Activated B cell treated with CpG ODN at 0.5 μM for 24 hours (primary cell): ENCODE measurements at regions of chr2 and their contacts with region 1.

Region 1: GRCh38 chr2:43131024-43131889 is 95.1 kb downstream of the ZFP36L2 start:
- DNase-seq: peak; percentile 62
- ATAC-seq: peak; percentile 61
- H3K4me3 Mint-ChIP-seq: peak overlapping the region; percentile 8
- H3K27ac Mint-ChIP-seq: peak overlapping the region; percentile 92
- H3K4me1 Mint-ChIP-seq: peaks cover 93% of the 10 kb centered on the region
- H3K27me3 Mint-ChIP-seq: no peaks in the 10 kb centered on the region
- CTCF ChIP-seq: no peak

Region 2: GRCh38 chr2:42386684-42387083 is 744.6 kb before region 1 on chr2:
- CTCF ChIA-PET with region 1: no interaction called
- POLR2A ChIA-PET with region 1: no interaction called
- intact Hi-C with region 1: no loop called
- DNase-seq: no peak
- ATAC-seq: no peak
- H3K4me3 Mint-ChIP-seq: no peak overlapping the region
- H3K27ac Mint-ChIP-seq: no peak overlapping the region
- H3K4me1 Mint-ChIP-seq: no peaks in the 10 kb centered on the region
- H3K27me3 Mint-ChIP-seq: peaks cover 7% of the 10 kb centered on the region
- CTCF ChIP-seq: no peak

Region 3: DNA sequence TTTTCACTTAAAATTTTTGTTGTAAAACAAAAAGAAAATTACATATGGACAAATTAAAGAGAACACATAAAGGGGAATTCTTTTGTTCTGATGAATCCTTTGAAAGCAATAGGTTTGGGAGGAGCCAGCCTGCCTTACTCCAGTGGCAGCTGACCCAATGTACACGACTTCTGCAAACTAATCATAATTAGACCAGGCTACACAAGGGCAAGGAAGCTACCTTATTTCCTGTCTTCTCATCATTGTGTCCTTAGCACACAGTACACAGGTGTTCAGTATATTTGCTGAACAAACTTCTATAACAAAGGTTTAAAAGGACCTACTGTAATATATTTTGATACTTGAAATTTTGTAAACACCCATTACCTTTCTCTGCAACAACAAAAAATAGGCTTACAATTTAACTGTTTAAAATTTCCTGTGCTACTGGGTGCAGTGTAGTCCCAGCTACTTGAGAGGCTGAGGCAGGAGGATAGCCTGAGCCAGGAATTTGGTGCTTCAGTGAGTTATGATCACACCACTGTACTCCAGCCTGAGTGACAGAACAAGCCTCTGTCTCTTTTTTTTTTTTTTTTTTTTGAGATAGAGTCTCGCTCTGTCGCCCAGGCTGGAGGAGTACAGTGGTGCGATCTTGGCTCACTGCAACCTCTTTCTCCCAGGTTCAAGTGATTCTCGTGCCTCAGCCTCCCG is 656.3 kb before region 1 on chr2:
- CTCF ChIA-PET with region 1: no interaction called
- POLR2A ChIA-PET with region 1: no interaction called
- intact Hi-C with region 1: no loop called
- DNase-seq: no peak
- ATAC-seq: no peak
- H3K4me3 Mint-ChIP-seq: no peak overlapping the region
- H3K27ac Mint-ChIP-seq: no peak overlapping the region
- H3K4me1 Mint-ChIP-seq: no peaks in the 10 kb centered on the region
- H3K27me3 Mint-ChIP-seq: no peaks in the 10 kb centered on the region
- CTCF ChIP-seq: no peak

Region 4: GRCh38 chr2:42944779-42945415 is 186.4 kb before region 1 on chr2:
- CTCF ChIA-PET with region 1: interaction called, 9 read pairs
- POLR2A ChIA-PET with region 1: no interaction called
- intact Hi-C with region 1: loop called (anchors 1 kb)
- DNase-seq: no peak
- ATAC-seq: no peak
- H3K4me3 Mint-ChIP-seq: no peak overlapping the region
- H3K27ac Mint-ChIP-seq: no peak overlapping the region
- H3K4me1 Mint-ChIP-seq: peaks cover 32% of the 10 kb centered on the region
- H3K27me3 Mint-ChIP-seq: no peaks in the 10 kb centered on the region
- CTCF ChIP-seq: no peak

Region 5: GRCh38 chr2:42961385-42961811 is 169.9 kb before region 1 on chr2:
- CTCF ChIA-PET with region 1: no interaction called
- POLR2A ChIA-PET with region 1: no interaction called
- intact Hi-C with region 1: no loop called
- DNase-seq: no peak
- ATAC-seq: no peak
- H3K4me3 Mint-ChIP-seq: peak overlapping the region; percentile 50
- H3K27ac Mint-ChIP-seq: peak overlapping the region; percentile 13
- H3K4me1 Mint-ChIP-seq: peaks cover 32% of the 10 kb centered on the region
- H3K27me3 Mint-ChIP-seq: peaks cover 2% of the 10 kb centered on the region
- CTCF ChIP-seq: no peak

Region 6: GRCh38 chr2:43105586-43106558 is 25.4 kb before region 1 on chr2:
- CTCF ChIA-PET with region 1: interaction called, 5 read pairs
- POLR2A ChIA-PET with region 1: interaction called, 4 read pairs
- intact Hi-C with region 1: loop called (anchors 1 kb)
- DNase-seq: no peak
- ATAC-seq: peak; percentile 67
- H3K4me3 Mint-ChIP-seq: peak overlapping the region; percentile 60
- H3K27ac Mint-ChIP-seq: peak overlapping the region; percentile 85
- H3K4me1 Mint-ChIP-seq: peaks cover 65% of the 10 kb centered on the region
- H3K27me3 Mint-ChIP-seq: no peaks in the 10 kb centered on the region
- CTCF ChIP-seq: no peak

Region 7: GRCh38 chr2:43169987-43170386 is 38.7 kb after region 1 on chr2:
- CTCF ChIA-PET with region 1: interaction called, 16 read pairs
- POLR2A ChIA-PET with region 1: interaction called, 82 read pairs
- intact Hi-C with region 1: loop called (anchors 1 kb)
- DNase-seq: peak; percentile 43
- ATAC-seq: no peak
- H3K4me3 Mint-ChIP-seq: peak overlapping the region; percentile 79
- H3K27ac Mint-ChIP-seq: peak overlapping the region; percentile 98
- H3K4me1 Mint-ChIP-seq: peaks cover 82% of the 10 kb centered on the region
- H3K27me3 Mint-ChIP-seq: no peaks in the 10 kb centered on the region
- CTCF ChIP-seq: no peak

Region 8: GRCh38 chr2:43219383-43220228 is 88.3 kb after region 1 on chr2:
- CTCF ChIA-PET with region 1: interaction called, 336 read pairs
- POLR2A ChIA-PET with region 1: interaction called, 561 read pairs
- intact Hi-C with region 1: loop called (anchors 1 kb)
- DNase-seq: peak; percentile 58
- ATAC-seq: peak; percentile 54
- H3K4me3 Mint-ChIP-seq: peak overlapping the region; percentile 92
- H3K27ac Mint-ChIP-seq: peak overlapping the region; percentile 99
- H3K4me1 Mint-ChIP-seq: peaks cover 71% of the 10 kb centered on the region
- H3K27me3 Mint-ChIP-seq: peaks cover 2% of the 10 kb centered on the region
- CTCF ChIP-seq: no peak

Region 9: DNA sequence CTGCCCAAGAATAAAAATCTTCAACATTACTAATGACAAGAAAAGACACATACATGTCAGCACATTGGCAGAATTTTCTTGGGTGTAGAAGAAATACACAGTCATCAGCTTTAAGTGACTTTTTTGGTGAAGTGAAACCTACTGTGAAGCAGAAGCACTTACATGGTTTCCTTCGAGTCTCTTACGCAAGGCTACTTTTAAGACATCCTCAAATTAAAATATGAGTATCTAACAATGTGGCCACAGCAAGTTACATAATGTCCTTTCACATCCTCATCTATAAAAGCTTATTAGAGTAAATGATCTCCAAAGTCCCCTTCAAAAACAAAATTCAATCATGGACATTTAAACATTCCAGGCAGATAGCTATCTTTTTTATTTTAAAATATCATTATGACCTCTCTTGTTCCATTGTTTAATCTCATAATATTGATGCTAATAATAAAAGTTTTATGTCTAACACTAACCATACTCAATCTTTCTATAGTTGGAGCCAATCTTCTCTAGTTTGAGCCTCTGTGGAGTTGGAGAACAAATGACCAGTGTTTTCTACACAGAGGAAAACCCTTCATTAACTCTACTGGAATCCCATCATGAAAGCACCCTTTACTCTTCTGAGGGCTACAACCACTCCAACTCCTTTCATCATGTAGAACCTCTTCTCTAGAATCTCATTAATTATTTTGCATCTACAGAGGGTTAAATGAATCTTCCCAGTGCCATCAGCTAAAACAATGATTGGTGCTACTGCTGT is 277.3 kb after region 1 on chr2:
- CTCF ChIA-PET with region 1: no interaction called
- POLR2A ChIA-PET with region 1: no interaction called
- intact Hi-C with region 1: loop called (anchors 10 kb)
- DNase-seq: no peak
- ATAC-seq: peak; percentile 97
- H3K4me3 Mint-ChIP-seq: peak overlapping the region; percentile 59
- H3K27ac Mint-ChIP-seq: peak overlapping the region; percentile 81
- H3K4me1 Mint-ChIP-seq: peaks cover 29% of the 10 kb centered on the region
- H3K27me3 Mint-ChIP-seq: no peaks in the 10 kb centered on the region
- CTCF ChIP-seq: no peak